ENCODE measurements at regions of chrX and their contacts with region 1.

Region 1: GRCh38 chrX:66728818-66729271 is 90.0 kb upstream of the EDA2R start:
- DNase-seq: peak; percentile 20 to 68 (median 50)
- H3K4me3 ChIP-seq: peak overlapping the region in 57 of 59 donors; percentile 24 to 68 (median 51)
- H3K27ac ChIP-seq: peak overlapping the region in 26 of 59 donors; percentile 19 to 79 (median 62)
- H3K27me3 ChIP-seq: peaks cover 0 to 36% (median 0%) of the 10 kb centered on the region in 45 donors
- CTCF ChIP-seq: peak in 55 of 56 donors; percentile 48 to 82 (median 68)

Region 2: DNA sequence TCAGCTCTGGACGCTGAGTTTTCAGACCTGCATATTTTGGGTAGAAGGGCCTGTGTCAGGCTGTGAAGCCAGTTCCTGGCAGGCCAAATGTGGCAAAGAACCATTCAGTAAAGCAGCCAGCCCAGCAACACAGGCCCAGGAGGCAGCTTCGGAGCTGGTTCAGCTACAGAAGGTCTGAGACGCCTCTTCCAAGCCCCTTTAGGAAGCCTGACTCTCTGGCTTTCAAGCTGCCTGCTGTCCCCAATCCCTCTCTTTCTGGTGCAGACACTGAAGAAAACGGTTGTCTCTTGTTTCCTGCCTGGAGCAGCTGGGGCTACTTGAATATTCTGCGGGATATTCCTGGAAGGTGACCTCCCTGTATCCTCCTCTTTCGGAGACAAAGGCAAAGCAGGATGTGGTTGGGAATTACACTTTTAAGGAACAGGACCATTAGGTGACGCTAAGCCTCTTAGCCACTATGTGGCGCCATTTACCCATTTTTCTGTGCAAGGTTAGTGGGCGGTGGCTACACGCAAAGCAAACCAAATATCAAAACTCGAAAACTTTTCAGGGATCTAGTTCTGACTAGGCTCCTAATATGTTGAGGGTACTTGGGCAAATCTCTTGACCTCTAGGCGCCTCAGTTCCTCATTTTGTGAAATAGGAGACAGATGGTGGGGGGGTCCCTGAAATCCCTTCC is 1147.0 kb before region 1 on chrX:
- intact Hi-C with region 1: loop called (anchors 5 kb)
- DNase-seq: peak in 6 of 10 donors; percentile 9 to 58 (median 50)
- H3K4me3 ChIP-seq: peak overlapping the region in 1 of 59 donors; percentile 36
- H3K27ac ChIP-seq: no peak overlapping the region
- H3K27me3 ChIP-seq: peaks cover 0 to 70% (median 15%) of the 10 kb centered on the region in 45 donors
- CTCF ChIP-seq: peak; percentile 37 to 85 (median 74)

Region 3: GRCh38 chrX:66200855-66201795 is 527.7 kb before region 1 on chrX:
- intact Hi-C with region 1: loop called in 1 of 2 experiments (anchors 5 kb)
- DNase-seq: no peak
- H3K4me3 ChIP-seq: peak overlapping the region in 1 of 59 donors; percentile 5
- H3K27ac ChIP-seq: no peak overlapping the region
- H3K27me3 ChIP-seq: peaks cover 0 to 82% (median 29%) of the 10 kb centered on the region in 45 donors
- CTCF ChIP-seq: peak in 53 of 56 donors; percentile 13 to 70 (median 46)

Region 4: DNA sequence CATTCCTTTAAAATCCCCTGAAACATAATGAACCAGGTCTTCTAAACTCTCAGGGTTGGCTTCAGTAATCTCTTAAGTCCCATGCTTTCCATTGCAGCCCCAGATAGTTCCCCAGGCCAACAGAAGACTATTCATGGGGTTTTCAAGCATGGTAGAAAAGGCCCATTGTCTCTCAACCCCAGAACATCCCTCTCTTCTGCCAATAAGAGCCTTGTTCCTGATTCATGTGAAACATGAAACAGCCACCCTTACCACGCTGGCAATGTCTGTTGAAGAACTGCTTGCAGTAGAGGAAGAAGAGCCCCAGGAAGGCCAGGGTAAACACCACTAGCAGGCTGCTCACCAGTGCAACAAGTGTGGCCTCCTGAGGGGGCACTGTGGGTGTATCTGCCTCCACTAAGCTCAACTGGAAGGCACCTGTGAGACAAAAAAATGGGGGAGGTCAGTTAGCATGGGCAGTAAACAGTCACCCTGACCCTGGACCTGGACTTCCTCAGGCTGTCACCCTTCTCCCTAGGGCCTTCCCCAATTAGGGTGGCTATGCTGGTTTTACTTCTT is 126.4 kb before region 1 on chrX:
- intact Hi-C with region 1: loop called in 1 of 2 experiments (anchors 10 kb)
- DNase-seq: peak in 3 of 10 donors; percentile 2 to 48 (median 45)
- H3K4me3 ChIP-seq: no peak overlapping the region
- H3K27ac ChIP-seq: peak overlapping the region in 48 of 59 donors; percentile 2 to 84 (median 53)
- H3K27me3 ChIP-seq: peaks cover 0 to 81% (median 18%) of the 10 kb centered on the region in 45 donors
- CTCF ChIP-seq: peak in 3 of 56 donors; percentile 7 to 11 (median 9)

Region 5: DNA sequence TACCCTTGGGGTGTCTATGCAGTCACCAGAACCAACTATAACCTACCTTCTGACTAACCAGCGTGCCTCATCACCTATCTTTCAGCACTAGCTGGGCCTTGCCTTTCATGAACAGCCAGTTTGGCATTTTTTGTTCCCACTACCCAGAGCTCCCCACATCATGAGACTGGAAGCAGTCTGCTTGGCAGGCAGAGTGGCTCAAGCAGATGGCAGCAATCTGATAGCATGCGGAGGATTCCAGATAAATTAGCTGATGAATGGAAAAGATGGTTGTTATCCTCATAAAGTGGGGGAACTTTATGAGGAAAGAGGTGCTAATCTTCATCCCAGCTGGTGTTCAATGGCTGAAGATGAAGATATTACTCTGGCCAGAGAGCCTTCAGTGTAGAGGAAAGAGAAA is 153.3 kb after region 1 on chrX:
- intact Hi-C with region 1: no loop called
- DNase-seq: no peak
- H3K4me3 ChIP-seq: no peak overlapping the region
- H3K27ac ChIP-seq: no peak overlapping the region
- H3K27me3 ChIP-seq: peaks cover 0 to 62% (median 9%) of the 10 kb centered on the region in 45 donors
- CTCF ChIP-seq: no peak